ENCODE measurements at regions of chr9 and their contacts with region 1.

Region 1: GRCh38 chr9:37309136-37309535 is 113.4 kb upstream of the GRHPR start:
- DNase-seq: peak; percentile 41
- ATAC-seq: peak; percentile 75
- H3K4me3 Mint-ChIP-seq: no peak overlapping the region
- H3K27ac Mint-ChIP-seq: peak overlapping the region; percentile 25
- H3K4me1 Mint-ChIP-seq: peaks cover 11% of the 10 kb centered on the region
- H3K27me3 Mint-ChIP-seq: no peaks in the 10 kb centered on the region
- CTCF ChIP-seq: no peak

Region 2: GRCh38 chr9:37027582-37028419 is 281.3 kb before region 1 on chr9:
- CTCF ChIA-PET with region 1: no interaction called
- POLR2A ChIA-PET with region 1: no interaction called
- intact Hi-C with region 1: loop called (anchors 10 kb)
- DNase-seq: peak; percentile 94
- ATAC-seq: peak; percentile 96
- H3K4me3 Mint-ChIP-seq: peak overlapping the region; percentile 68
- H3K27ac Mint-ChIP-seq: no peak overlapping the region
- H3K4me1 Mint-ChIP-seq: peaks cover 34% of the 10 kb centered on the region
- H3K27me3 Mint-ChIP-seq: peaks cover 87% of the 10 kb centered on the region
- CTCF ChIP-seq: no peak

Region 3: DNA sequence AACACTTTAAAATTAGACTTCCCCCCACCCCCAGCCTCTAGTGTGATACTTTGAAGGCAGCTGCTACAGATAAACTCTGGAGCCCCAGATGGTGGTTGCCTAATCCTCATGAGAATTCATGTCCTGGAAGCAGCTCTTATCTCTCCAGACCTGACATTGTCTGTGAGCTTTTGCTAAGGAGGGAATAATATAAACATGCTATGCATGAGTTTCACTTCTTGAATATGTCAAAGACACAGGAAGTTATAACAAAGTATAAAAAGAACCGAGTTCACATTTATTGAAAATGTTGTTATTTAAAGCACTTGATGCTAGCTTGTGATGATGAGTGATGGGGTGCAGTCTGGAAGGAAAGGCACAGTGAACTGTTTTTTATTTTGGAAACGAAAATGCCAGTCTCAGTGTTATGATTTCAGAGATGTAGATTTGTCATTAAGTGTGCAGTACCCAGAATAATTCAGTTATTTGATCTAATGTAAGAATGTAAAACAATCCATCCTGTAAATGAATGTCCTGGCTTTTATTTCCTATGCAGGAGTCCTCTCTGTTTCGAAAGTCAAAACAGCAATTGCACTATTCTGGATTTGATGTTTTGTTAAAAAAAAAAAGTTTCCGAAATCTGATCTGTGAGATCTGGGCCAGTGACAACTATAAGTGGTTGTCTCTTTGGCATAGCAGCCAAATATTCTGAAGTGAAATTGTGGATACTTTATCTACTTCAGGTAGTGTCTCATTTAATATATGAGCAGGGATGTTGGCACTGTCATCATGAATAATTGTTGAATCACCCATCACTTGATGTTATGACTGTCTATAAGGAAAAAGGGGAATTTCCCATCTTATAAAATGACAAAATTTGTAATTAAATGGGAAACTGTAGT is 111.7 kb before region 1 on chr9:
- CTCF ChIA-PET with region 1: no interaction called
- POLR2A ChIA-PET with region 1: no interaction called
- intact Hi-C with region 1: loop called (anchors 10 kb)
- DNase-seq: peak; percentile 13
- ATAC-seq: peak; percentile 66
- H3K4me3 Mint-ChIP-seq: peak overlapping the region; percentile 11
- H3K27ac Mint-ChIP-seq: peak overlapping the region; percentile 89
- H3K4me1 Mint-ChIP-seq: peaks cover 72% of the 10 kb centered on the region
- H3K27me3 Mint-ChIP-seq: no peaks in the 10 kb centered on the region
- CTCF ChIP-seq: no peak

Measured in activated CD8-positive, alpha-beta T cell treated with anti-CD3 and anti-CD28 coated beads for 36 hours (primary cell).